AG04449 (cell line): ENCODE measurements at regions of chr11 and their contacts with region 1.

Region 1: GRCh38 chr11:102666331-102666957 is 39.1 kb downstream of the MMP27 start:
- DNase-seq: no peak
- H3K4me3 ChIP-seq: no peak overlapping the region
- CTCF ChIP-seq: peak; percentile 63

Region 2: GRCh38 chr11:102287964-102288724 is 378.3 kb before region 1 on chr11:
- CTCF ChIA-PET with region 1: interaction called, 79 read pairs
- POLR2A ChIA-PET with region 1: no interaction called
- DNase-seq: no peak
- H3K4me3 ChIP-seq: no peak overlapping the region
- CTCF ChIP-seq: peak; percentile 62

Region 3: GRCh38 chr11:102346748-102347461 is 319.5 kb before region 1 on chr11 and contains the start of gene BIRC2:
- CTCF ChIA-PET with region 1: interaction called, 53 read pairs
- POLR2A ChIA-PET with region 1: interaction called, 3 read pairs
- DNase-seq: no peak
- H3K4me3 ChIP-seq: peak within 1 kb of the TSS; percentile 82
- CTCF ChIP-seq: peak; percentile 94

Region 4: DNA sequence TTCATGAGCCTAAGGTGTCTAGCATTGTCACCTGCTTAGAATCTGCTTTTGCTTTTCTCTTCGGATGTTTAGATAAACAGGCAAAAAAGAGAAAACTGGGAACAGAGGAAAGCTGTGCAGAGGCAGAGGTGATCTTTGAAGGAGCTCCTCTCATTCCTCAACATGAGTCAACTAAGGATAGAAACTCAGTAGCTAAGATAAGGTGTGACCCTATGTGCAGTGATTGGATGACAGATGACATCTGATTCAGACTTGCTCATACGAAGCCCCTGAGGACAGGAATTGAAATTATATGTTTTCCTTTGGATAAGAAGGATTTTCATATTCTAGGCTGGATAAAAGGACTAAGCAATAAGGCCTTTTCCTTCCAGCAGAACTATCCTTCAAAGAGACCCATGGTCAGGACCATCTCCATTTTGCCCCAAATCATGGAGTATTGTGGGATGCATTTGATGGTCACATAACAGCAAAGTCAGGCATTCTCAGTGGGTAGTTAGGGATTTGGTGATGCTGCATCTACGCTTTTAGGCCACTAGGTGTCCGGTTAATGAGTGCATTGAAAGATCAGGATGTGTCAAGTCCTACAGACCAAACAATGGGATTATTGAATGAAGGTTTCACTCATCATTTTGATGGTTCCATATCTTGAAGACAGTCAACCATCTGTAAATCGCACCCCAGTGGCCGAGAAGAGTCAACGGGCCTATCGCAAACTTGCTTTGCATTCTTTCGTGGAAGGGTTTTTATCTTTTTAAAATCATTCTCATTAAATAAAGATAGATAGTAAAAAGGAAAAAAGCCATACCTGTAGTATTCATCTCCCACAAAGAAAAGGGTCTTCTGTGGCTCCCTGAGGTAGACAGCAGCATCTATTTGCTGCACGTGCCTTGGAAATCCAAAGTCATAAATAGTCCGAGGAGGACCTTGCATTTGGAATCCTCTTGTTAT is 73.5 kb before region 1 on chr11:
- CTCF ChIA-PET with region 1: interaction called, 10 read pairs
- POLR2A ChIA-PET with region 1: no interaction called
- DNase-seq: no peak
- H3K4me3 ChIP-seq: no peak overlapping the region
- CTCF ChIP-seq: peak; percentile 48

Region 5: DNA sequence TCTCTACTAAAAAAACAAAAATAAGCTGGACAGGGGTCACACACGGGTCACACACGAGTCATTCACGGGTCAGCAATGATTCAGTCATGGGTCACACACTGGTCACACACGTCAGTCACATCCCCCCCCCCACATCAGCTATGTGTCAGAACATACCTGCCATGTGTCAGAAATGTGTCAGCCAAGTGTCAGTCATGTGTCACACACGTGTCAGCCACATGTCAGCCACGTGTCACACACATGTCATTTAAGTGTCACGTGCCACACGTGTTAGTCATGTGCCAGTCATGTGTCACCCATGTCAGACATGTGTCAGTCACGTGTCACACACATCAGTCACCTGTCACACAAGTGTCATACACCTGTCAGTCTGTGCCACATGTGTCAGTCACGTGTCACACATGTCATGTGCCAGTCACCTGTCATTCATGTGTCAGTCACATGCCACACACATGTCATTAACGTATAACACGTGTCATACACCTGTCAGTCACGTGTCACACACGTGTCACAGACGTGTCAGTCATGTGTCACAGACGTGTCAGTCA is 12.6 kb before region 1 on chr11:
- CTCF ChIA-PET with region 1: interaction called, 25 read pairs
- POLR2A ChIA-PET with region 1: no interaction called
- DNase-seq: no peak
- H3K4me3 ChIP-seq: no peak overlapping the region
- CTCF ChIP-seq: no peak

Region 6: DNA sequence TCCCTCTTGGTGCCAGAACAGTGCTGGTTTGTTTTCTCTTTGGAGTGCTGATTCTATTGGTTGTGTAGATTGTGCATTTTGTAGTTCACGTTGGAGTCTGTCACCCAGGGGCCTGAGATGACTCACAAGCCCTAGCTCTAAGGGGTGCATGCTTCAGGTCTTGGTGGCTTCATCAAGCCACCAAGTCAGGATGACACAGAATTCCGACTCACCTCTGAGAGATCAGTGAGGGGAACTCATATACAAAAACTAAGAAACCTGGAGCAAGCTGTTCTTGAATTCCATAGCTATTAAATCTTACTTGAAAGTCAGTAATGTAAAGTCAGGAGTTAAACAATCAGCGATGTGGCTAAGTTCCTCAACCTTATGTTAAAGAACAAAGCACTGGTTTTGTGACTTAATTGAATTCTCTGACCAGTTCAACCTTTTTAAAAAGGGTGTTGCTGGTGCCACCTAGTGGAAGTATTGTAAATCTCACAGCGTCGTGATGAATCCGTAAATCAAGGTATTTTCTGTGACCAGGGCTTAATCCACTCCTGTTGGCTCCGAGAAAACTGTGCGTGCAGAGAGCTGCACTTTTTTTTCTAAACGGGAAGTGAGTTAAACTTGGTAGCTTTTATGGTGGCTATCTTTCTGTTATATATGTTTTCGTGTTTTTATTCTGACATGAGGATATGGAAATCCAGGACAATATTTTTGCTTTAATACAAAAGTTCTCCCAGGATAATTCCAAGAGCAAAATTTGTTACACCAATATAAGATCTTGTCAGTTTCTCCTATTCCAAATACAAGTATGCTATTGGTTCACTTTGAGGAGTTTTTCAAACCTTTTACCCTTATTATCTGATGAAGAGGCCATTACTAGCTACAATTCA is 274.5 kb after region 1 on chr11:
- CTCF ChIA-PET with region 1: interaction called, 12 read pairs
- POLR2A ChIA-PET with region 1: no interaction called
- DNase-seq: no peak
- H3K4me3 ChIP-seq: no peak overlapping the region
- CTCF ChIP-seq: peak; percentile 52